Activated CD4-positive, alpha-beta memory T cell treated with anti-CD3 and anti-CD28 coated beads, Interleukin-2, amount 10 ng/mL, durations not matched to agents 7 days and 5 days (primary cell): ENCODE measurements at regions of chr7 and their contacts with region 1.

Region 1: DNA sequence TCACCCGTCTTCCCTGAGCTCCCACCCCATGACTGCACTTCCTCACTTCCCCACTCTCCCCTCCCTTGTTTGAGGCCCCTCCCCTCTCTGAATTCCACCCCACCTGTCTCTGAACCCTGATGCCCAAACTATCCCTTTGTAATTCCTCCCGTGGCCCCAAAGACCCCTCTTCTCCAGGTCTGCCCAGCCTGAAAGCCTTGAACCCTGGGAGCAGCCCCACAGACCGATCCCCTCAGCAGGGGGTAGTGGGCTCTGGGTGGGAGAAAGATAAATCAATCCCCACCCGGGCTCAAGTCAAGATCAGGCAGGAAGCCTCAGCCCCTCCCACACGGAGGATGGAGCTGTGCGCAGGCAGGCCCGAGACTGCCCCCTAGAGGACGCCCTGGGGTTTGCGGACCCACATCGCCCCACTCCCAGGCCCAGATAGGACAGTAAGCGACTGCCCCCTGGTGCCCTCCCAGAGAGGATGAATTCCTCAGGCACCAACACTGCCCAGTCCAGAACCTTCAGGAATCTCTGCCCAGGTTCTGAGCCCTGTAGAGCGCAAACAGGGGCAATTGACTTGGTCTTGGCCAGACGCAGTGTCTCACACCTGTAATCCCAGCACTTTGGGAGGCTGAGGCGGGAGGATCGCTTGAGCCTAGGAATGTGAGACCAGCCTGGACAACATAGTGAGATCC is 11.7 kb downstream of the HSPB1 start:
- DNase-seq: peak; percentile 97
- H3K4me3 Mint-ChIP-seq: peak overlapping the region; percentile 17
- H3K27ac Mint-ChIP-seq: no peak overlapping the region
- H3K4me1 Mint-ChIP-seq: peaks cover 26% of the 10 kb centered on the region
- H3K27me3 Mint-ChIP-seq: no peaks in the 10 kb centered on the region

Region 2: GRCh38 chr7:76179686-76180085 is 134.5 kb before region 1 on chr7:
- CTCF ChIA-PET with region 1: interaction called, 74 read pairs
- POLR2A ChIA-PET with region 1: interaction called, 6 read pairs
- DNase-seq: no peak
- H3K4me3 Mint-ChIP-seq: no peak overlapping the region
- H3K27ac Mint-ChIP-seq: no peak overlapping the region
- H3K4me1 Mint-ChIP-seq: peaks cover 4% of the 10 kb centered on the region
- H3K27me3 Mint-ChIP-seq: no peaks in the 10 kb centered on the region

Region 3: DNA sequence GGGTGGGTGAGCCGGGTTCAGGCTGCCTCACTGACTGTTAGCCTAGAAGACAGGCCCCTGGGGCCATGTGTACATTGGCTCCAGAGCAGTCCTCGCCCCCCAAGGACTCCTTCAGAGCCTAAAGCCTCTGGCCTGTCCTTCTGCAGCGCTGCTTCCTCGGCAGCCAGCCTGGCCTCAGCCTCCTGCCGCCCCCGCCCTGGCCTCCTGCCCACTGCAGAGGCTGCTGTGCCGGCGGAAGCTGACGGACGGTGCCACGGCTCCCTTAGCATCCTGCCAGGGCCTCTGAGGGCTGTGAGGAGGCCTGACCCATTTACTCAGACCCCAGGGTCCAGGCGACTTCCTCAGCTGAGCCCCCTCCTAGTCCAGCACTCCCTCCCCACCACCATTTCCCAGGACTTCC is 107.5 kb before region 1 on chr7:
- CTCF ChIA-PET with region 1: no interaction called
- POLR2A ChIA-PET with region 1: no interaction called
- DNase-seq: no peak
- H3K4me3 Mint-ChIP-seq: no peak overlapping the region
- H3K27ac Mint-ChIP-seq: no peak overlapping the region
- H3K4me1 Mint-ChIP-seq: no peaks in the 10 kb centered on the region
- H3K27me3 Mint-ChIP-seq: no peaks in the 10 kb centered on the region

Region 4: GRCh38 chr7:76241141-76241540 is 73.0 kb before region 1 on chr7:
- CTCF ChIA-PET with region 1: no interaction called
- POLR2A ChIA-PET with region 1: no interaction called
- DNase-seq: no peak
- H3K4me3 Mint-ChIP-seq: no peak overlapping the region
- H3K27ac Mint-ChIP-seq: no peak overlapping the region
- H3K4me1 Mint-ChIP-seq: no peaks in the 10 kb centered on the region
- H3K27me3 Mint-ChIP-seq: peaks cover 12% of the 10 kb centered on the region

Region 5: GRCh38 chr7:76302347-76303201 is 11.6 kb before region 1 on chr7 and contains the start of gene HSPB1:
- CTCF ChIA-PET with region 1: interaction called, 15 read pairs
- POLR2A ChIA-PET with region 1: interaction called, 19 read pairs
- DNase-seq: peak; percentile 62
- H3K4me3 Mint-ChIP-seq: peak within 1 kb of the TSS; percentile 84
- H3K27ac Mint-ChIP-seq: peak within 1 kb of the TSS; percentile 67
- H3K4me1 Mint-ChIP-seq: peaks cover 18% of the 10 kb centered on the region
- H3K27me3 Mint-ChIP-seq: peaks cover 9% of the 10 kb centered on the region
- total RNA-seq, gene HSPB1: 33.7 to 38.4 TPM

Region 6: DNA sequence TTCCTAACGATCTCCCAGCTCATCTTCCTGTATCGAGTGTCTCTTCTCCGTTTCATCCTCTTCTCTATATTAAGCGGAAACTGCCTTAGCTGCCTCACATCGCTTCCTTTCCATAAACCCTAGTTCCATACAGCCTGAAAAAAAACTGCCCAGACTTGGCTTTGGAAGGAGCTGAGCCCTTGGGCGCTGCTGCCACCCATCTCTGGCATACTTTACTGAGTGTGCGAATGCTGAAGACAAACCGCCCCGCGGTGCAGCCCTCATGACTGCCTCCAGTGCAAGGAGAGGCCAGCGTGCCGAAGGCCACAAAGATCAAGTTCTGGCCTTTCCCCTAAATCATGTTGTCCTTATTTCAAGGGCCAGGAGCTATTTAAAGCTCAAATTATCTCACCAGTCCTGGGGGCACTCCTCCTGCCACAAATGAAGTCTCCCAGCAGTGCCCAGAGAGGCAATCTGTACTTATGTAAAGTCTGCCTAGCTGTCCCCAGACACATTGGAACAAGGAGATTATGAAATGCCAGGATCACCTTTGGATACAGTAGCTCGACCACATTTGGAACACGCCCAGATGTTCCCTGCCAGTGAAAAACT is 19.4 kb after region 1 on chr7:
- CTCF ChIA-PET with region 1: interaction called, 9 read pairs
- POLR2A ChIA-PET with region 1: interaction called, 16 read pairs
- DNase-seq: no peak
- H3K4me3 Mint-ChIP-seq: no peak overlapping the region
- H3K27ac Mint-ChIP-seq: no peak overlapping the region
- H3K4me1 Mint-ChIP-seq: peaks cover 20% of the 10 kb centered on the region
- H3K27me3 Mint-ChIP-seq: no peaks in the 10 kb centered on the region

Region 7: DNA sequence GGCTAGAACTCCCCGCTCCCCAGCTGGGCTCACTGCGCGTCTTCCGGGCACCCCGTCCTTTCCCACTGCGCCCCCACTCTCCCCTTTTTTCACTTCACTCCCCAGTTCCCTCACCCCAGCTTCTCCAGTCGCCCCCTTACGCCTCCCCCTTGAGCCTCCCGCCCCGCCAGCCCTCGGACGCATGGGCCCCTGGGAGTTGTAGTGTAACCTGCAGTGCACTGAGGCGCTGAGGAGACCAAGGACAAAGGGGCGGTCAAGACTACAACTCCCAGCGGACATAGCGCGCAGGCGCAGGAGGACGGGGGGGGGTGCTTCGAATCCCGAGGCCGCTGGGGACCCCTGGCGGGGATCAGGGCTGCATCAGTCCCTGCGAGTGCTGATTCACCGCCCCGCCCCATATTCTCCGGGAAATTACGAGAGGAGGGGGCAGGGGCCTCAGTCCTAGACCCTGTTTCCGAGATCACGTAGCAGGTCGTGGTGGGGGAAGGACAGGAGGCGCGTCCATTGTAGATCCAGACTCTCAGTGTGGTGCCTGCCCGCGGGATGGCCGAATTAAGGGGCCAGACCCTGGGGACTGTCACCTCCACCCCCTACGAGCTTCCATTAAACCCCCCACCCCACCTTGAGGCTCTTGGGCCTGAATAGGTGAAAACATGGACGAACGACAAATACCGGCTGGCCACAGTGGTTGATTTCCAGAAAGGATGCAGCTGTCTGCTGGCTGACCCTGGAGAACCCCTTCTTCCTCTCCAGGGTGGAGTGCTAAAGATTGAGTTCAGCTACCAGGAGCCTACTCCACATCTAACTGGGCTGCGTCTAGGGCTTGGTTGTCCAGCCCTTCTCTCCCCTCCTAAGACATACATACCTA is 45.2 kb after region 1 on chr7:
- CTCF ChIA-PET with region 1: interaction called, 52 read pairs
- POLR2A ChIA-PET with region 1: interaction called, 136 read pairs
- DNase-seq: peak; percentile 97
- H3K4me3 Mint-ChIP-seq: peak overlapping the region; percentile 93
- H3K27ac Mint-ChIP-seq: peak overlapping the region; percentile 93
- H3K4me1 Mint-ChIP-seq: peaks cover 51% of the 10 kb centered on the region
- H3K27me3 Mint-ChIP-seq: no peaks in the 10 kb centered on the region